ENCODE measurements at regions of chr15 and their contacts with region 1.

Region 1: DNA sequence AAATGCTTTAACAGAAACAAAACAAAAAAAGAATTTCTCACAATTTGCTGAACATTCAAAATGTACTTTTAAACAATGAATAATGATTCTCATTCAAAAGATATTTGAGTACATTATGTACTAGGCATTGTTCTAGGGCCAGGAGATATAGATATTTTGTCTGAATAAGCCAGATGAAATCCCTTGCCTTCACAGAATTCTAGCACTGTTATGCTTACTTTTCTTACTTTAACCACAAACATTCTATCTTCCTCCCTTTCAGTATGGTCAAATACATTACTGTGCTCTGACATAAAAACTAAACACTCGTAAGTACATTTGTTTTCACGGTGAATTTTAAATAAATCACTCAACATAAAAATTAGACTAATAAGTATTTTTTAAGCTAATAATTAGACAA is 116.7 kb downstream of the ADAM10 start:
- DNase-seq: no peak
- ATAC-seq: no peak
- H3K4me3 Mint-ChIP-seq: no peak overlapping the region
- H3K27ac Mint-ChIP-seq: no peak overlapping the region
- H3K4me1 Mint-ChIP-seq: peaks cover 28% of the 10 kb centered on the region
- H3K27me3 Mint-ChIP-seq: no peaks in the 10 kb centered on the region

Region 2: GRCh38 chr15:57580866-57581265 is 1051.9 kb before region 1 on chr15:
- CTCF ChIA-PET with region 1: no interaction called
- POLR2A ChIA-PET with region 1: no interaction called
- intact Hi-C with region 1: no loop called
- DNase-seq: no peak
- ATAC-seq: no peak
- H3K4me3 Mint-ChIP-seq: no peak overlapping the region
- H3K27ac Mint-ChIP-seq: no peak overlapping the region
- H3K4me1 Mint-ChIP-seq: no peaks in the 10 kb centered on the region
- H3K27me3 Mint-ChIP-seq: peaks cover 17% of the 10 kb centered on the region

Region 3: DNA sequence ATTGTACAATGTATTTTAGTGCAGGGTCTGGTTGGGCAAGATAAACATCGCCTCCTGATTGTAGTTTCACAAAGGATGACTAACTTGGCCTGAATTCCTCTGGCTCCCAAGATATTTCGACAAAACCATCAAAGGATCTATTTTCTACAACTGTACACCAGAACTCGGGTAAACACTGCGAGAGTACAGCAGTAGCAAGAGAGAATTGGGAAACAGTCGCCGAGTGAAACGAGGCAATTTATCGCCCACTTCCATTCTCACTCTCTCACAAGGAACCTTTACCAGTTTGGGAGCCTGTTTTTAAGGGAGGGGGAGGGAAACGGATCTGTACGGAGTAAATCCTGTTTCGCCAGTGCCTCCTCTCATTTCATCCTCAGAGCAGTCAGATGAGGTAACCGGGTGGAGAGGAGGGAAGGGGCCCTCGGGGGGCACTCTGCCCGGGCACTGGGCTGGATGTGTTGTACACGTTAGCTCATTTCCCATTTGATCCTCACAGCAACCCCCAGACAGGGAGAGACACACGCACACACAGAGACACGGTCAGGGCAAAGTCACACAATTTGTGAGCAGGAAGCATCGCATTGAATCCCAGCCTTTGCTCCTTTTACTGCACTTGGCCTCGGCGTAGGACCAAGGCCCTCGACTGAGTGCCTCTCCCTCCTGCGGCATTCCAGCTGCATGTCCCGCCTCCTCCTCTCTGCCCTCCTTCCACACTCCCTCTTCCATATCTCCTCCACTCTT is 80.9 kb before region 1 on chr15:
- CTCF ChIA-PET with region 1: no interaction called
- POLR2A ChIA-PET with region 1: no interaction called
- intact Hi-C with region 1: no loop called
- DNase-seq: no peak
- ATAC-seq: no peak
- H3K4me3 Mint-ChIP-seq: no peak overlapping the region
- H3K27ac Mint-ChIP-seq: peak overlapping the region; percentile 10
- H3K4me1 Mint-ChIP-seq: peaks cover 13% of the 10 kb centered on the region
- H3K27me3 Mint-ChIP-seq: no peaks in the 10 kb centered on the region

Region 4: DNA sequence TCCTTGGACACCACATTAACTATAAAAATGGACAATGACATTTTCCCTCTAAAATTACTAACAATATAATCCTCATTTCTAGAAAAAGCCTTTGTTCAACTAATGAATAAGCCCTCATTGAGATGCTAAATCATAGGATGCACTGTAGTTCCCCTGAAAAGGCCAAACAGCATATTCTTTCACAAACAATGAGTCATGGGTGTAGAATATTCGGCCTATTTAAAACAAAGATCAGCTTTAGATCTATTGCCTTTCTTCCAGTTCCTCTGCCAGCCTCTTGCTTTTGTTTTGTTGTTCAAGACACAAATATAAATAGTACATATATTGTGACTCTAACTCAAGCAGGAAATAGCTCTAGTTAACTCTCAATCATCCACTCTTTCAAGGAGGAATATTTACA is 34.2 kb after region 1 on chr15:
- CTCF ChIA-PET with region 1: no interaction called
- POLR2A ChIA-PET with region 1: interaction called, 14 read pairs
- intact Hi-C with region 1: no loop called
- DNase-seq: no peak
- ATAC-seq: no peak
- H3K4me3 Mint-ChIP-seq: no peak overlapping the region
- H3K27ac Mint-ChIP-seq: no peak overlapping the region
- H3K4me1 Mint-ChIP-seq: peaks cover 12% of the 10 kb centered on the region
- H3K27me3 Mint-ChIP-seq: no peaks in the 10 kb centered on the region

Measured in activated CD4-positive, alpha-beta T cell treated with anti-CD3 and anti-CD28 coated beads for 36 hours (primary cell).